Esophagus muscularis mucosa (tissue), 4 donors: ENCODE measurements at regions of chr4 and their contacts with region 1.

Region 1: DNA sequence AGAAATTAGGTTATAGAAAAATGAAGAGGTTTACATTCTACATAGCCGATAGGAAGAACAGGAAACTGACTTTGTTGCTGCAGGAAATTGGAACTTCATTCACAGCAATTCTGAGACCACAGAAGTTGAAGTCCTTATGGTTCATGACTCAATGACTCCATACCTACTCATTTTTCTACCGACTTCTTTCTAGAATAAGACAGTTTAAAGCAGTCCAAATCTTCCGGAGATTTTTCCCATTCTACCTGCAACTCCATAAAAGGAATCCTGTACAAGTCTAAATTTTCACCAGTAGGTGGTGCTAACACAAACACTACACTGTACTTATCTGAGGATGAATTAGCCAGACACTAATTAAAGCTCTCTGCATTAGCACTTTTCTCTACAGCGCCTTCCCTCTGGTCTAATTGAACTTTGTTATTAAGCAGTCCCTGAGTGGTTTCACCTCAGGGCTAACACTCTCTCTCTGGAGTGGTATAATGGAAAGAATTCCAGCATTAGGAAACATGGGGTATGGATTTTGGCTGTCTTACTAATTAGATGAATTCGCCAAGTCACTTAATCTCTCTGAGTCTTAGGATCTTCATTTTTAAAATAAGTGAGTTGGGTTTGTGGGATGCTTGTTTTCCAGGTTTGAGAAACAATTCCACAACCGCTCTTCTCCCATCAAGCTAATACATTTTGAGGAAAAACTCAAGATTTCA is 167.9 kb downstream of the SMIM20 start:
- DNase-seq: no peak
- H3K4me3 ChIP-seq: no peak overlapping the region
- H3K27ac ChIP-seq: no peak overlapping the region
- H3K4me1 ChIP-seq: peaks cover 0 to 16% (median 5%) of the 10 kb centered on the region in 4 donors
- H3K27me3 ChIP-seq: no peaks in the 10 kb centered on the region
- CTCF ChIP-seq: peak; percentile 66 to 76 (median 68)
- EP300 ChIP-seq: no peak
- POLR2A ChIP-seq: no peak

Region 2: GRCh38 chr4:25807102-25807728 is 274.7 kb before region 1 on chr4:
- intact Hi-C with region 1: no loop called
- DNase-seq: no peak
- H3K4me3 ChIP-seq: no peak overlapping the region
- H3K27ac ChIP-seq: no peak overlapping the region
- H3K4me1 ChIP-seq: no peaks in the 10 kb centered on the region
- H3K27me3 ChIP-seq: no peaks in the 10 kb centered on the region
- CTCF ChIP-seq: no peak
- EP300 ChIP-seq: no peak
- POLR2A ChIP-seq: no peak

Region 3: DNA sequence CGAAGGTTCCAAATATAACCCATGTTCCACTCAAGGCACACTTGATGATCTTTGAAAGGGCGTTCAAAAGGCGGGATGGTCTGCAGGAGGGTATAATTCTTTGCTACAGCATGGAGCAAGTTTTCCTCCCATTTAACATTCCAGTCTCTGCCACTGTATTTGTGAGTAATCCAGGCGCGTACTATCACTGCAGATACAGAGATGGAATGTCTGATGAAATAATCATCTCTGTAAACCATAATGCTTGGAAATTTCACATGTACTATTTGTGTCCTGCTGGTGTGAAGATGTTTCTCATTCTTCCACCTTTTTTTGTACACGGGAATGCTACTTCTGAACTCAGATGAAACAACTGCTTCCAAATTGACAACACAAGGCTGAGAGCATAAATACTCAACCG is 234.6 kb before region 1 on chr4:
- intact Hi-C with region 1: no loop called
- DNase-seq: no peak
- H3K4me3 ChIP-seq: no peak overlapping the region
- H3K27ac ChIP-seq: no peak overlapping the region
- H3K4me1 ChIP-seq: peaks cover 0 to 4% (median 0%) of the 10 kb centered on the region in 4 donors
- H3K27me3 ChIP-seq: peaks cover 0 to 8% (median 0%) of the 10 kb centered on the region in 4 donors
- CTCF ChIP-seq: no peak
- EP300 ChIP-seq: no peak
- POLR2A ChIP-seq: no peak

Region 4: DNA sequence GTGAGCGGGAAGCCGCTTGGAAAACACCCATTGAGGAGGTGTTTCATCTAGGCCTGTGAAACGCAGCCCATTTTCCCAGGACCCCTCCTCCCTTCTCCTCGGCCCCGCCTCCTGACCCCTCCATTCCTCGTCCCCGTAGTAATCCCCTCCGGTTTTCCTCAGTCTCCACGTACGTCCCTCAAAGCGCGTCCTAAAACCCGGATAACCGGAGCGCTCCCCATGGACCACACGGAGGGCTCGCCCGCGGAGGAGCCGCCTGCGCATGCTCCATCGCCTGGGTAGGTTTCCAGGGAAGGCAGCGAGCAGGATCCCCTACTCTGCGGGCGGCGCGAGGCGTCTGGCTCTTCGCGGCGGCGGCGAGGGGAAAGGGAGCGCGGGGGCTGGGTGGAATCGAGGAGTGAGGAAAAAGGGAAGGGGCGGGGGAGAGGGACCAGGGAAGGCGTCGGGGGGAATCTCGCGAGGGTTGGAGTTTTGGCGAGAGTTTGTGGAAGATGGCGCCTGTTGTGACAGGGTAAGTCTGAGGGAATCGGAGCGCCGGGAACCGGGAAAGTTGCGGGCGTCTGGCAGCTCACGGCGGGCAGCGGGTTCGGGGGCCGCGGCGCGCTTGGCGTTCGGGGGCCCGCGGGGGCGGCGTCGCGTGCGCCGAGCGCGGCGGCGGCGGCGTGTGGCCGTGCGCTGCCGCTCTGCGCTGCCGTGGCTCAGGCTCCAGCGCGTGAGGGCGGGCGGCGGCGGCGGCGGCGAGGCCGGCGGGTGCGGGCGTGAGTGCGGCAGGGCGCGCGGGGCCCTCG is 238.8 kb after region 1 on chr4 and contains the start of gene RBPJ:
- intact Hi-C with region 1: loop called (anchors 5 kb)
- DNase-seq: peak; percentile 97
- H3K4me3 ChIP-seq: peak within 1 kb of the TSS; percentile 66 to 86 (median 82)
- H3K27ac ChIP-seq: peak within 1 kb of the TSS; percentile 90 to 98 (median 95)
- H3K4me1 ChIP-seq: peaks cover 25 to 50% (median 38%) of the 10 kb centered on the region in 4 donors
- H3K27me3 ChIP-seq: no peaks in the 10 kb centered on the region
- CTCF ChIP-seq: peak in 1 of 3 experiments; percentile 7
- EP300 ChIP-seq: no peak
- POLR2A ChIP-seq: peak; percentile 59
- total RNA-seq, gene RBPJ: 49.7 to 75.2 (median 60.8) TPM

Region 5: GRCh38 chr4:26410385-26411293 is 328.7 kb after region 1 on chr4:
- intact Hi-C with region 1: loop called (anchors 2 kb)
- DNase-seq: no peak
- H3K4me3 ChIP-seq: no peak overlapping the region
- H3K27ac ChIP-seq: no peak overlapping the region
- H3K4me1 ChIP-seq: peaks cover 12 to 39% (median 28%) of the 10 kb centered on the region in 4 donors
- H3K27me3 ChIP-seq: no peaks in the 10 kb centered on the region
- CTCF ChIP-seq: peak; percentile 61 to 66 (median 65)
- EP300 ChIP-seq: no peak
- POLR2A ChIP-seq: no peak